PC-9 (cell line): ENCODE measurements at regions of chr9 and their contacts with region 1.

Region 1: DNA sequence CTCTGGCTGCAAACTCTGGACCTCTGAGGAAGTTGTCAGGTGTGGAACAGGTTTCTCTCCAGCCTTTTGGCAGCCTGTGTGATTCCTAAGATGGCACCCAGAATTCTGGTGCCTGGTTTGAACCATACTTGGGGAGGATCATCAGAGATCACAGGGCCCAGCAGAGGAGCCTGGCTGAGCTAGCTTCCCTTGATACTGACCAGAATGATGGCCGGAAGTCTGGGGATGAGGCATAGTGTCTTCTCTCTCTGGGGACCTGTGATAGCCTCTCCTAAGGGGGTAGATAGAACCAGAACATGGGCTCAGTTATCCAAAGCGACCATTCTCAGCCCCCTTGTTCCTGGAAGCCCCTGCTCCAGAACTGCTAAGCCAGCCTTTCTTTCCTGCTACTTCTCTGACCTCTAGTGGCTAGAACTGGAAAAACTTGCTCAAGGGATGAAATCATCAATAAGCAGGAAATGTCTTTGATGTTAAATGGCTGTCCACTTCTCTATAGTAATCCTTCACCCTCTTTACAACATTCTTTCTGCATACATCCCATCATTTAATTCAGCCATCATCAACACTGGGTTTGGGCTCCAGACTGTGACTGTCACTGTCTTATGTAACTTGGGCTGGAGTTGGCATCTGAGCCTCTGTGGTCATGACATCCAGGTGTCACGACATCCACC is 55.1 kb downstream of the C9orf152 start:
- DNase-seq: peak in 1 of 2 experiments; percentile 56
- H3K4me3 ChIP-seq: no peak overlapping the region
- H3K27ac ChIP-seq: 0 out of 2 replicates have a peak overlapping the region, but pooled peaks have one; percentile 22
- H3K4me1 ChIP-seq: peaks cover 8% of the 10 kb centered on the region
- H3K27me3 ChIP-seq: no peaks in the 10 kb centered on the region
- CTCF ChIP-seq: peak; percentile 91

Region 2: GRCh38 chr9:109708451-109708945 is 444.3 kb before region 1 on chr9:
- CTCF ChIA-PET with region 1: no interaction called
- POLR2A ChIA-PET with region 1: no interaction called
- intact Hi-C with region 1: no loop called
- DNase-seq: no peak
- H3K4me3 ChIP-seq: no peak overlapping the region
- H3K27ac ChIP-seq: no peak overlapping the region
- H3K4me1 ChIP-seq: 0 out of 2 replicates have a peak, but pooled peaks cover 6% of the 10 kb centered on the region
- H3K27me3 ChIP-seq: no peaks in the 10 kb centered on the region
- CTCF ChIP-seq: no peak

Region 3: DNA sequence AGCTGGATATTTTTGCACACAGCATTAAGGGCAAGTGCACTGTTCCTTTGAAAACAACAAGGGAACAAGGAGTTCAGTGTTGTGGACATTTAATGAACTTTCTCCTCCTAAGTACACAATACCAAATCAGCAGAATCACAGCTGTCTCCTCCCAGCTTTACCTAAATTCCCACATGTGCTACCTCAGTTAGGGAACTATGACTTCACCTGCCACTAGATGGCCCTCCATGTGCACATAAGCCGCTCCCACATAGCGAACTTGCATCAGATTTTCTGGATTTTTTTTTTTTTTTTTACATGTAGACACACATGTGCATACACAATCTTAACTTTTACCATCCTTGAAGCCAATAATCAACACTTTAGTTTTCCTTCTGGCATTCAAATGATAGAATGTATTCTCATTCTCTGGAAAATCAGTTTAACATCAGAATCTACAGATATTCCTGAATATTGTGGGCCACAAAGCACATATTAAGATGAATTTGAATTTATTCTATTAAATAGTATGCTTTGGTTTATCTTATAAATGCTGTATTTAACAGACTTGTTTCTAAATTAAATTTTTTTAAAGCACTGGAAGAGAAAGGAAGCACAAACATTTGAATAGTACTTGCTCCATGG is 249.2 kb before region 1 on chr9:
- CTCF ChIA-PET with region 1: interaction called, 7 read pairs
- POLR2A ChIA-PET with region 1: no interaction called
- intact Hi-C with region 1: loop called (anchors 1 kb)
- DNase-seq: peak; percentile 68 to 70
- H3K4me3 ChIP-seq: no peak overlapping the region
- H3K27ac ChIP-seq: no peak overlapping the region
- H3K4me1 ChIP-seq: 0 out of 2 replicates have a peak, but pooled peaks cover 3% of the 10 kb centered on the region
- H3K27me3 ChIP-seq: no peaks in the 10 kb centered on the region
- CTCF ChIP-seq: peak; percentile 91

Region 4: DNA sequence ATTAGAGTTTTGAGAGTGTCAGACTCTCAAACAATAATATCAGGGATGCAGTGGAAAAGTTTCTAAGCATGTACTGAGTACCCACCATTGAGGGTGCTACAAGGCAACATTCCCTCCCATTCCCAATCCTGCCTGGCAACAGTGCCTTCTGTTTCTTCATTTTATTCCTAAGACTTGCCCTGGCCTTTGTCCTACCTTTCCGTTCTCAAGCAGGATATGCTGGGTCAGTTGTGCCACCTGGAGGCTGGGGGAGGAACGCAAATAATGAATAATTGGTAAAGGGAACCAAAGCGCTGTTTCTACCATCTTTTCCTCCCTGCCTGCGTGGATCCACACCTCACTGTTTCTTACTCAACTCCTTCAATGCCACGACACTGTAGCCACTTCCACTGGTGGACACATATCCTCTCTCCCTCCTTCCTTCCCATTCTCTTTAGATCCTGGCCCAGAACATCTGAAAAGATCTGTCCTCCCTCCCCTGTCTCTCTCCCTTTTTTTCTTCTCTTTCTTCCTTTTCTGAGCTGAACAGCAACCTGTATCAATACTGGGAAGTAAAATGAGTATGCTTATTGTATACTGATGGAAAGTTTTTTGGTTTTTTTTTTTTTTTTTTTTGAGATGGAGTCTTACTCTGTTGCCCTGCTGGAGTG is 94.4 kb before region 1 on chr9:
- CTCF ChIA-PET with region 1: no interaction called
- POLR2A ChIA-PET with region 1: no interaction called
- intact Hi-C with region 1: loop called (anchors 1 kb)
- DNase-seq: peak; percentile 54 to 67
- H3K4me3 ChIP-seq: no peak overlapping the region
- H3K27ac ChIP-seq: peak overlapping the region; percentile 8; the same call in 1 of the 2 replicates
- H3K4me1 ChIP-seq: peaks cover 7% of the 10 kb centered on the region
- H3K27me3 ChIP-seq: no peaks in the 10 kb centered on the region
- CTCF ChIP-seq: peak; percentile 77

Region 5: GRCh38 chr9:110081395-110081794 is 71.4 kb before region 1 on chr9:
- CTCF ChIA-PET with region 1: no interaction called
- POLR2A ChIA-PET with region 1: interaction called, 18 read pairs
- intact Hi-C with region 1: no loop called
- DNase-seq: no peak
- H3K4me3 ChIP-seq: no peak overlapping the region
- H3K27ac ChIP-seq: no peak overlapping the region
- H3K4me1 ChIP-seq: 0 out of 2 replicates have a peak, but pooled peaks cover 6% of the 10 kb centered on the region
- H3K27me3 ChIP-seq: no peaks in the 10 kb centered on the region
- CTCF ChIP-seq: no peak

Region 6: DNA sequence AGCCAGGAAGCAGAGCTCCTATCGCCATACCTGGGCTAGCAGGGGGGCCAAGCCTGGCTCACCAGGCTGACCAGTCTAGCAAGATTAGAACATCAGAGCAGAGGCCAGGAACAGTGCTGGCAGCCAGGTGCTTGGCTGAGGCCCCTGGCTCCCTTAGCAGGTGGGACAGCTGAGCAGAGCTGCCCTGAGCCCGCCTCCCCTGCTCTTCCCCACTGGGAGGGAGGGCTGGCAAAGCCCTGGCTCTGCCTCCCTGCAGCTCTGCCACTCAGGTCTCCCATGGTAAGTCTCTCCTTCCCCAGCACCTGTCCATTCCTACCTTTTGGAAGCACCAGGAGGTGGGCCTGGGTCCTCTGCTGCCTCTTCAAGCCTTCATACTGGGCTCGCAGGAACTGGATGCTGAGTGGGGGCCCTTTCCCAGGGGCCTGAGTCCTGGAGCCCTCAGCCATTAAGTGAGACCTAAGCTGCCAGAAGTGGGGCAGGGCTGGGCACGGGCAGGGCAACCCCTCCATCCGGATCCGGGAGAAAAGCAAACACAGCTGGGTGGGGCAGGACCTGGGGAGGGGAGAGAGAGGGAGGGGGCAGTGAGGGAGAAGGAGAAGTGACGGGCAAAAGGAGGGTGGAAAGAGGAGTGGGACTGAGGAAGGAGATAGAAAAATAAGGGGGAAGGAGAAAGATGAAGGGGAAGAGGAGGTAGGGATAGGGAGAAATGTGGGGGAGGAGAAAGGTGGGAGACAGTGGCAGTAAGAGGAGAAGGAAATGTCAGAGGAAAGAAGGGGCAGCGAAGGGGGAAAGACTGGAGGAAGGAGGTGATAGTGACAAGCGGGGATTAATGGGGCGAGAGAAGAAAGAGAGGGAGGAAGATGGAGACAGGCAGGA is 54.5 kb after region 1 on chr9:
- CTCF ChIA-PET with region 1: no interaction called
- POLR2A ChIA-PET with region 1: interaction called, 22 read pairs
- intact Hi-C with region 1: no loop called
- DNase-seq: peak; percentile 83 to 87
- H3K4me3 ChIP-seq: peak overlapping the region; percentile 50
- H3K27ac ChIP-seq: peak overlapping the region; percentile 44
- H3K4me1 ChIP-seq: peaks cover 33% of the 10 kb centered on the region
- H3K27me3 ChIP-seq: no peaks in the 10 kb centered on the region
- CTCF ChIP-seq: no peak